ENCODE measurements at regions of chr12 and their contacts with region 1.

Region 1: GRCh38 chr12:95998611-95999286 is 2.6 kb upstream of the HAL start:
- DNase-seq: peak; percentile 65
- ATAC-seq: peak; percentile 86
- H3K4me3 ChIP-seq: no peak overlapping the region
- H3K27ac ChIP-seq: no peak overlapping the region
- H3K4me1 ChIP-seq: peaks cover 54% of the 10 kb centered on the region
- H3K27me3 ChIP-seq: no peaks in the 10 kb centered on the region
- CTCF ChIP-seq: peak; percentile 90
- EP300 ChIP-seq: no peak
- POLR2A ChIP-seq: no peak
- RAD21 ChIP-seq: peak; percentile 81

Region 2: DNA sequence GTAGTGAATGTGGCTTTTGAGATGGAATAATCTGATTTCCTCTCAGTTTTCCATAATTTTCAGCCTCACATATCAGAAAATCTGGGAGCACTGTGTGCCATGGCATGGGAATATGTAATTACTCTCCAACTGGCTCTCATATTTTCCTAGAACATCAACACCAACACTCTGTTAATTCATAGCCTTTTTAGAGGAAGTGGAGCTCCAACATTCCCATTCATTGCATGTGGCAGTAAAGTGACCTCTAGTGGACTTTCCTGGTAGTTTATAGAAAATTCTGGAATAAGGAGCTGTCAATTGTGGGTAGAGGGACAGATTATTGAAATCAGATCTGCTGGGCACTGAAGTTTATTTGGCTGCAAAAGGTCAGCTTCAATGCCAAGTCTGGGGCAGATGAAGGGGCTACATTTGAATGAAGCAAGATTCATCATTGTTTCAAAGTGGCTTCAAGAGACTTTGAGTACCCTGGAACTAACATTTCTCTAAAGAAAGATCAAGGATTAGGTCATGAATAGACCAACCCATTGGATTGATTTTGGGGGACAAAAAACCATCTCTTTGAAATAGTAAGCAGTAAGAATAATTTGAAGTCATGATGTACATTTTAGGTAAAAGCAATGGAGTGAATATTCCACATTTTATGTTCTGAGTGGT is 423.8 kb before region 1 on chr12:
- CTCF ChIA-PET with region 1: no interaction called
- POLR2A ChIA-PET with region 1: no interaction called
- in situ Hi-C with region 1: loop called (anchors 25 kb)
- intact Hi-C with region 1: no loop called
- DNase-seq: peak; percentile 31
- ATAC-seq: peak; percentile 53; the same call in 2 of the 3 replicates
- H3K4me3 ChIP-seq: no peak overlapping the region
- H3K27ac ChIP-seq: no peak overlapping the region
- H3K4me1 ChIP-seq: no peaks in the 10 kb centered on the region
- H3K27me3 ChIP-seq: no peaks in the 10 kb centered on the region
- CTCF ChIP-seq: peak; percentile 64
- EP300 ChIP-seq: no peak; a peak in 1 of 4 replicates
- POLR2A ChIP-seq: no peak
- RAD21 ChIP-seq: no peak

Region 3: DNA sequence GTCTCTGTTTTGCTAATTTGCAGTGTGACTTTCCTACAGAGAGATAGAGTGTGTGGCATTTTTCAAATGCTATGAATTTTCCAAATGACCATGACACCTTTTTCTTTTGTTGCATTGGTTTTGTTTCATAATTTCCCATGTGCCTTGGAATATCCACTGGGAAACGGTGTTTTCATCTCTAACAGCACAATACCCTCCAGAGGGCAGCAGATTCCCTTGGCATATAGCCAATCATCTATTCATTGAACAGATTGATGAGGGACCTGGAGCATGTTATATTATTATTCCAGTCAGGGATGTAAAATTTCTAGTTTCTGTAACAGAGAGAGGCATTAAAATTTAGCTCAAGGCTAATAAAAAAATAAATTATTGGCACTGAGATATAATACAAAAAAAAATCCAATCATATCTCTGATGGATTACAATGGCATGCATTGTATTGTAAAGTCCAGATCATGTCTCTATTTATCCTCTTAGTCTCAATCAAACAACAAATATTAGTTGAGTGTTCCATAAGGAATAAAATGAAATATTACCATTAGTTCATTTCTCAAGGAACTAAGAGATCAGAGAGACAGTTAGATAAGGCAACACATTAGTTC is 178.5 kb before region 1 on chr12:
- CTCF ChIA-PET with region 1: interaction called, 7 read pairs
- POLR2A ChIA-PET with region 1: no interaction called
- in situ Hi-C with region 1: no loop called
- intact Hi-C with region 1: loop called (anchors 1 kb)
- DNase-seq: peak; percentile 62
- ATAC-seq: peak; percentile 43
- H3K4me3 ChIP-seq: no peak overlapping the region
- H3K27ac ChIP-seq: no peak overlapping the region
- H3K4me1 ChIP-seq: peaks cover 9% of the 10 kb centered on the region; the same call in 1 of the 2 replicates
- H3K27me3 ChIP-seq: no peaks in the 10 kb centered on the region
- CTCF ChIP-seq: peak; percentile 75
- EP300 ChIP-seq: no peak
- POLR2A ChIP-seq: no peak
- RAD21 ChIP-seq: no peak

Region 4: DNA sequence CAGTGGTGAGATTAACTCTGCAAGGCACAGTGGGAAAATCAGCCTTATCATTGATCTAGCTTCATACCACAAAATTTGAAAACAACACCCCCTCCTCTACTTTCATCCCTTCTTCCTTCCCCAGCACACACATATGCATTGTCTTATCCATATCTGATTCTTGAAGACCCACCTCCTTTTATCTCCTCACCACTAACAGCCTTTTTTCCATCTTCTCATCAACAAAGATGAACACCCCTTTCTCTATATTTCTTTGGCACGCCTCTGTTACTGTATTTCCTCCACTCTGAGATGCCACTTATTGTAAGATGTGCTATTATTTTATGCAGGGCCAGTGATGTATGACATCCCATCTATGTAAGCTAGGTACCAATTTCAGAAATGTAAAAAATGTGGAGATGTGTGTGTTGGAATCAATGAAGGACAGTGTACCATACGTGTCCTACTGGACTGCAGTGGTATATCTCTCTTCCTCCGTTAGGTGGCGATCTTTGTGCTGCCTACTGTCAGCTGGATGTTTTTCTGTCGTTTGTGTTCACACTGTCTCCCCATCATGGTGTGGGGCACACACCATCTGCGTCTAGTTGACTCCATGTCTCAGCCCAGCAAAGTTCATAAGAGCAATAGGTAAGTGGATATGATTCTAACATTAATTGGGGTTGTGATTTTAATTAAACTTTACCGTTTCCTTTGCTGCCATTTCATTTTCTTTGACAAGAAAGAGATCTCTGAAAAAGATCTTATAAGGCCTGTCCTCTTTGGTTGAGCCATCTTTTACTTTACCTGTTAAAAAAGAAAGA is 80.4 kb before region 1 on chr12:
- CTCF ChIA-PET with region 1: interaction called, 35 read pairs
- POLR2A ChIA-PET with region 1: interaction called, 12 read pairs
- in situ Hi-C with region 1: loop called (anchors 5 kb)
- intact Hi-C with region 1: loop called (anchors 1 kb)
- DNase-seq: peak; percentile 71
- ATAC-seq: peak; percentile 98
- H3K4me3 ChIP-seq: no peak overlapping the region
- H3K27ac ChIP-seq: no peak overlapping the region
- H3K4me1 ChIP-seq: peaks cover 8% of the 10 kb centered on the region
- H3K27me3 ChIP-seq: no peaks in the 10 kb centered on the region
- CTCF ChIP-seq: peak; percentile 96
- EP300 ChIP-seq: no peak
- POLR2A ChIP-seq: no peak
- RAD21 ChIP-seq: peak; percentile 88

Region 5: DNA sequence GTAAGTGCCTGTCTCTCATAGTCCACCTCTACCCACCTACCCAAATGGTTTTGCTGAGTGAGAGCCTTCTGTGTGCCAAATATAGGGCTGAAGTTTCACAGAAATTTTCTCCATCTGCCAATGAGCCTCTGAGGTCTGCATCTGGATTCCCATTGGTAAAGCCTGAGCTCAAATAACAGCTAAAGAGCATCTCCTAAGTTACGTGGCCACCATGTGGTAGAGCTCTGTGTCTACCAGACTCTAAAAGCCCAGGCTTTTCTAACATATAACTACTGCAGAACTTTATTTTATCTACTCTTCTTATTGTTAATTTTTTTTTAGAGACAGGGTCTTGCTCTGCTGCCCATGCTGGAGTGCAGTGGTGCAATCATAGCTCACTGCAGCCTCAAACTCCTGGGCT is 39.6 kb before region 1 on chr12:
- CTCF ChIA-PET with region 1: no interaction called
- POLR2A ChIA-PET with region 1: interaction called, 10 read pairs
- in situ Hi-C with region 1: no loop called
- intact Hi-C with region 1: loop called (anchors 5 kb)
- DNase-seq: peak; percentile 59
- ATAC-seq: peak; percentile 89
- H3K4me3 ChIP-seq: no peak overlapping the region
- H3K27ac ChIP-seq: no peak overlapping the region
- H3K4me1 ChIP-seq: peaks cover 45% of the 10 kb centered on the region
- H3K27me3 ChIP-seq: no peaks in the 10 kb centered on the region
- CTCF ChIP-seq: peak; percentile 54
- EP300 ChIP-seq: no peak
- POLR2A ChIP-seq: no peak
- RAD21 ChIP-seq: peak; percentile 75; the same call in 1 of the 2 replicates

Region 6: DNA sequence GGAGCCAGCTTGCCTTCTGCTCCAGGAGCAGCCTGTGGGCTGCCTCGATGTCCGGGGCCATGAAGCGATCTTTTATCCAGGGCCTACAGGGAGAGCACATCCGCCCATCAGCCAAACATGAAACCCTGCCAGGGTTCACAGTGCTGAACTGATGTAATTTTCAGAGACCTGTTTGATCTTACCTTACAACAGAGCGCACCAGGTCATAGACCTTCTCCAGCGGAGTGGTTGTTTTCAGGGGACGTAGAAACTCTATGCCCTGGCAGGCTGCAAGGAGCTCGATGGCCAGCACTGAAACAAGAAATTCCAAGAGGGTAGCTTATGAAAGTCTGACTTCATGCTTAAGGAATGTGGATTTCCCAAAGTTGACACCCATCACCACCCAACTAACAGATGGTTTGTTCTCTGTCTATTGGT is 22.3 kb before region 1 on chr12:
- CTCF ChIA-PET with region 1: no interaction called
- POLR2A ChIA-PET with region 1: interaction called, 46 read pairs
- in situ Hi-C with region 1: no loop called
- intact Hi-C with region 1: loop called (anchors 2 kb)
- DNase-seq: peak; percentile 82
- ATAC-seq: peak; percentile 86
- H3K4me3 ChIP-seq: 0 out of 6 replicates have a peak overlapping the region, but pooled peaks of 1 of the 3 experiments have one; percentile 11
- H3K27ac ChIP-seq: peak overlapping the region; percentile 74
- H3K4me1 ChIP-seq: peaks cover 82% of the 10 kb centered on the region
- H3K27me3 ChIP-seq: no peaks in the 10 kb centered on the region
- CTCF ChIP-seq: no peak
- EP300 ChIP-seq: peak; percentile 27 to 88; a peak in 2 of 4 replicates
- POLR2A ChIP-seq: no peak
- RAD21 ChIP-seq: no peak

Region 7: DNA sequence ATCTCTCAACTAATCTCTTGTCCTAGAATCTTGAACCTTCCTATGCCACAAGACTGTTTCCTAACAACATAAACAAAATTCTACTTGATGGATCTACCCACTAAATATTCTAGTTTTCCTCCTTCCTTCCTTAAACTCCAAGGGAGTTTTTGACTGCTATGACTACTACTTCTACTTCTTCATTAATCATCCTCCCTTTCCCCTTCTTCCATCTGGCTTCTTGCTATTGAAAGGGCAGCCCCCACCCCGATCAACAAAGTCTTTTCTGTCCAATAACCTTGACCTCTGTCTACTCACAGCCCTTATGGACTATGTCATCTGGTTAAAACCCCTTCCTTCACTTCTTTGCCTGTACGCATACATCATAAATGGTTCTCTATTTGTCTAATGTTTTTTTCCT is 31.1 kb after region 1 on chr12:
- CTCF ChIA-PET with region 1: no interaction called
- POLR2A ChIA-PET with region 1: no interaction called
- in situ Hi-C with region 1: no loop called
- intact Hi-C with region 1: no loop called
- DNase-seq: no peak
- ATAC-seq: no peak
- H3K4me3 ChIP-seq: no peak overlapping the region
- H3K27ac ChIP-seq: no peak overlapping the region
- H3K4me1 ChIP-seq: peaks cover 13% of the 10 kb centered on the region
- H3K27me3 ChIP-seq: no peaks in the 10 kb centered on the region; a peak in 1 of 5 replicates
- CTCF ChIP-seq: no peak
- EP300 ChIP-seq: no peak
- POLR2A ChIP-seq: no peak
- RAD21 ChIP-seq: no peak

Measured in HepG2 (cell line).